Stomach (tissue), 19 donors: ENCODE measurements at regions of chr5 and their contacts with region 1.

Region 1: DNA sequence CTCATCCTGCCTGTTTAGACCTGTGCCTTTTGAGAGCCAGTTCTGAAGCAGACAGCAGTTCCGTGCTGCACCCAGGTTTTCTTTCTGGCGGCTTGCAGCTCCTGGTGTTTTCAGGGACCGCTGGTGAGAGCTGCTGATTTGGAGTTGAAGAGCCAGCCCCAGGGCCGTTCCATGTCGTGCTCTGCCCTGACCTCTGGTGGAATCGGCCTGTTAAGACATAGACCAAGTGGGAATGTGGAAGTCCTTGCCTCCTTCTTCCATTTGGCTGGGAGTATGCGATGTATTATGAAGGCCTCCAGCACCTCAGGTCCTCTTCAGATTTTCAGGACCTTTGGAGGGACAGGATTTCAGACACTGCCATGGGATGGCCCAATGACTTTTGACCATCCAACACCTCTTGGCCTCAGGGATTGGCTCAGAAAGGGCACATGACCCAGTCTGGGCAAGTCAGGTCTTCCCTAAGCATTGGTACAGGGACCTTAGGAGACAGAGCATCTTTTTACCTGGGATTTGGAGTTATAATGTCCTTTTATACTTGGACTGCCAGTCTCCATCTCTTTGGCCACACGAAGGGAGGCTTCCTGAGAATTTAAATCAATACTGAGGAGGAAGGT is 136.1 kb upstream of the CLINT1 start:
- DNase-seq: peak; percentile 79 to 91
- H3K4me3 ChIP-seq: no peak overlapping the region
- H3K27ac ChIP-seq: peak overlapping the region in 1 of 5 donors; percentile 21
- H3K4me1 ChIP-seq: peaks cover 0 to 10% (median 6%) of the 10 kb centered on the region in 4 donors
- H3K27me3 ChIP-seq: no peaks in the 10 kb centered on the region
- CTCF ChIP-seq: peak in 5 of 7 experiments; percentile 52 to 82 (median 62)
- EP300 ChIP-seq: no peak
- POLR2A ChIP-seq: no peak

Region 2: GRCh38 chr5:157624144-157624543 is 370.9 kb before region 1 on chr5:
- intact Hi-C with region 1: no loop called
- DNase-seq: no peak
- H3K4me3 ChIP-seq: no peak overlapping the region
- H3K27ac ChIP-seq: no peak overlapping the region
- H3K4me1 ChIP-seq: no peaks in the 10 kb centered on the region
- H3K27me3 ChIP-seq: no peaks in the 10 kb centered on the region
- CTCF ChIP-seq: no peak
- EP300 ChIP-seq: no peak
- POLR2A ChIP-seq: no peak

Region 3: GRCh38 chr5:157816682-157817386 is 178.2 kb before region 1 on chr5:
- intact Hi-C with region 1: loop called (anchors 10 kb)
- DNase-seq: peak in 1 of 2 donors; percentile 39
- H3K4me3 ChIP-seq: no peak overlapping the region
- H3K27ac ChIP-seq: no peak overlapping the region
- H3K4me1 ChIP-seq: peaks cover 7 to 49% (median 29%) of the 10 kb centered on the region in 4 donors
- H3K27me3 ChIP-seq: no peaks in the 10 kb centered on the region
- CTCF ChIP-seq: peak in 5 of 7 experiments; percentile 16 to 56 (median 52)
- EP300 ChIP-seq: no peak
- POLR2A ChIP-seq: no peak